Right lobe of liver (tissue), 6 donors: ENCODE measurements at regions of chr10 and their contacts with region 1.

Region 1: GRCh38 chr10:116688241-116688711 is 54.1 kb downstream of the HSPA12A start:
- DNase-seq: no peak
- ATAC-seq: no peak
- H3K4me3 ChIP-seq: no peak overlapping the region
- H3K27ac ChIP-seq: no peak overlapping the region
- H3K4me1 ChIP-seq: no peaks in the 10 kb centered on the region
- H3K27me3 ChIP-seq: no peaks in the 10 kb centered on the region
- CTCF ChIP-seq: no peak
- POLR2A ChIP-seq: no peak

Region 2: DNA sequence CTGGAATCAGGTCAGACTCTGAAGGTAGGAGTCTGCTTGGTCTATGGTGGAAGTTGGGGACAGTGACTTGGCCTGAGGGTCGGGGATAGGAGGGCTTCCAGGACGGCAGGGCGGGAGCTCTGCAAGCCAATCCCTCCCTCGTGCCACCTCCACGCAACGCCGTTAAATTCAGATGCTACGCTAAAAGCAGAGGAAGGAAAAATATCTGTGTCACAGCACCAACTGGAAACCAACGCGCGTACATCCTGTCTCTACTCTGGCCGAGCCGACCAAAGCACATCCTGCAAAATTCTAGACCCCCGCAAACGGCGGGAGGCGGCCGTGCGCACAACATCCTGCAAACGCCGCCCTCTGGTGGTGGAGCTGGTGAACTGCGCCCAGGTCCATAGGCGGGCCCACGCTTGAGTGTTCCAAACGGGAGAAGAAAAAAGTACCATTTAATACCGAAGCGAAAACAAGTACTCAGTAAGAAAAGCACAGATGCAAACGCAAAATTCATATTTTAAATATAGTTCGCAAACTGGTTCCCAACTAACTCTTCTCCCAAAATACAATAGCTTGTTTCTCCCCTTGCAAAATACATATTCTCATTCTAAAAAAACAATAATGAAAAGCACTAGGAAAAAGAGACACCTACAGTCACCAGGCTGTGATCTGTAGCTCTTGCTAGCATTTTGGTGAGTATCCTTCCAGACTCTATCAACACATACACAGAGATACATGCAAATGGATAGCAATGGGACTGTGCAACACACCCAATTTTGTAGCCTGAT is 99.8 kb after region 1 on chr10:
- intact Hi-C with region 1: loop called (anchors 5 kb)
- DNase-seq: peak; percentile 70 to 78 (median 77)
- ATAC-seq: peak; percentile 90 to 98 (median 94)
- H3K4me3 ChIP-seq: peak overlapping the region in 1 of 3 donors; percentile 17
- H3K27ac ChIP-seq: no peak overlapping the region
- H3K4me1 ChIP-seq: peaks cover 0 to 7% (median 2%) of the 10 kb centered on the region in 4 donors
- H3K27me3 ChIP-seq: peaks cover 0 to 5% of the 10 kb centered on the region in 2 donors
- CTCF ChIP-seq: peak; percentile 90 to 99 (median 99)
- POLR2A ChIP-seq: no peak

Region 3: DNA sequence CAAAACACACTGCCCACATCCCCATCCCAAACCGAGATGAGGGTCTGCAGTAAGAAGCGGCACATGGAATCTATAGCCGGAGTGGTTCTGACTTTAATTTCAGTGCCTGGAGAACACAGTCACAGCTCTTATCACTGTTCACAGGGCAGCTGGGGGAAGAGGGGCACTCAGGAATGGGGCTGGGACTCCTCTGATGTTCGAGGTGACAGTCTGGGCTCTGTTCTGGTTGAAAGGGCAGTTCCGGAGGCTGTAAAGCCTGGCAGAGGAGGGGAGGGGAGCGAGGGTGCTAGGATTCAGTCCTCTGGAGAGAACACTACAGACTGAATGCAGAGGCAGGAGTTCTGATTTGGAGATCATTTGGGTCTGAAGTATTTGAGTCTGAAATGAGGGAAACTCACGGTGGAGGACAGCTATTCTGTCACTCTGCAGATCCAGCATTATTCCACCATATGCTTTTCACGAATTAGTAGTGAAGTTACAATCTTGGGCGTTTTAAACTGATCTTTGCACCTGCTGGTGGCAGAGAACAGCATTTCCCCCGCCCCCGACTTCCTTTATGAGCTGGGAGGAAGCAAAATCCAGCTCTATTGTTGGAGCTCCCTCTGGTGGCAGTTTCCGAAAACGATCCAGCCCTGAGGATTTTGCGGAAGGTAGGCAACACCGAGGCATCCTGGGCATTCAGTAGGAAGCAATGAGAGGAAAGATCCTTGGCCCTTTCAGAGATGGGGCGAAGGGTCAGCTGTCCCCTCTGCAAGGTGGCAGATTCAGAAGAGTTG is 486.4 kb after region 1 on chr10:
- intact Hi-C with region 1: loop called (anchors 10 kb)
- DNase-seq: peak; percentile 78 to 83 (median 80)
- ATAC-seq: peak; percentile 93 to 96 (median 94)
- H3K4me3 ChIP-seq: peak overlapping the region; percentile 41 to 50 (median 42)
- H3K27ac ChIP-seq: no peak overlapping the region
- H3K4me1 ChIP-seq: peaks cover 0 to 15% (median 0%) of the 10 kb centered on the region in 4 donors
- H3K27me3 ChIP-seq: peaks cover 0 to 26% of the 10 kb centered on the region in 2 donors
- CTCF ChIP-seq: peak; percentile 75 to 90 (median 81)
- POLR2A ChIP-seq: no peak